Activated CD4-positive, alpha-beta T cell treated with anti-CD3 and anti-CD28 coated beads, Interleukin-2, amount 10 ng/mL, durations not matched to agents 24 days and 14 days (primary cell): ENCODE measurements at regions of chr6 and their contacts with region 1.

Region 1: GRCh38 chr6:111737065-111737521 is 131.4 kb upstream of the TRAF3IP2 start:
- DNase-seq: no peak
- H3K4me3 Mint-ChIP-seq: peak overlapping the region; percentile 36
- H3K27ac Mint-ChIP-seq: peak overlapping the region; percentile 74
- H3K4me1 Mint-ChIP-seq: peaks cover 71% of the 10 kb centered on the region
- H3K27me3 Mint-ChIP-seq: no peaks in the 10 kb centered on the region

Region 2: GRCh38 chr6:111700135-111700690 is 36.9 kb before region 1 on chr6:
- intact Hi-C with region 1: no loop called
- DNase-seq: no peak
- H3K4me3 Mint-ChIP-seq: no peak overlapping the region
- H3K27ac Mint-ChIP-seq: no peak overlapping the region
- H3K4me1 Mint-ChIP-seq: peaks cover 16% of the 10 kb centered on the region
- H3K27me3 Mint-ChIP-seq: no peaks in the 10 kb centered on the region

Region 3: DNA sequence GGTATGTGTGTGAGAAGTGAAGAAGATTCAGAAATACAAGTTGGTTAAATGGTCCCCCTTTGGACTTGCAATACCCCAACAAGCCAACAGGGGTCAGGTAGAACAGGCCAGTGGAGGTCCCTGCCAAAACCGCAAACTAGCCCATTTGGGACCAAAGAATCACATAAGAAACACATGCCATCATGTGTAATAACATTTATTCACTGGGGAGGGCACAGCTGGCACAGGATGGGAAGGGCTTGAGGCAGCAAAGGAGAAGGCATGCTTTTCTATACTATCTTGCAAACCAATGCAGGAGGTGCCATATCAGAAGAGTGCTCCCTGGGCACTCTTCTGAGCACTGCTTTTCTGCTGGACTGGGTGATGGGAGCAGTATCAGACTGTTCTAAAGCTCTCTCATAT is 15.3 kb before region 1 on chr6:
- intact Hi-C with region 1: loop called (anchors 2 kb)
- DNase-seq: peak; percentile 81
- H3K4me3 Mint-ChIP-seq: no peak overlapping the region
- H3K27ac Mint-ChIP-seq: peak overlapping the region; percentile 52
- H3K4me1 Mint-ChIP-seq: peaks cover 54% of the 10 kb centered on the region
- H3K27me3 Mint-ChIP-seq: no peaks in the 10 kb centered on the region

Region 4: GRCh38 chr6:111766201-111766857 is 29.2 kb after region 1 on chr6:
- intact Hi-C with region 1: no loop called
- DNase-seq: no peak
- H3K4me3 Mint-ChIP-seq: peak overlapping the region; percentile 47
- H3K27ac Mint-ChIP-seq: peak overlapping the region; percentile 98
- H3K4me1 Mint-ChIP-seq: peaks cover 93% of the 10 kb centered on the region
- H3K27me3 Mint-ChIP-seq: no peaks in the 10 kb centered on the region

Region 5: DNA sequence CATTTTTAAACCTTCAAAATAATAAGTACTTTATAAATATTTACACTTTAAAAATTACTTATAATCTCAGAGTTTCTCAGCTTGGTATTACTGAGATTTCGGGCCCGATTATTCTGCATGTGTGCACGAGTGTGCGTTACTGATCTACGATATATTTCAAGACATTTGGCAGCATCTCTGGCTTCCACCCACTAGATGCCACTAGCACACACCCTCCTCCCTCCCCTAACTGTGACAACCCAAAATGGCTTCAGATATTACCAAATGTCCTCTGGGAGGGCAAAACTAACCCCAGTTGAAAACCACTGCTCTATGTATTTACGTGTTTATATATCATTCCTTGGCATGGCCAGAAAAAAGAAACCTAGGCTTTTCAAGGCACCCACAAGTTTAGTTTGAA is 40.3 kb after region 1 on chr6:
- intact Hi-C with region 1: no loop called
- DNase-seq: no peak
- H3K4me3 Mint-ChIP-seq: no peak overlapping the region
- H3K27ac Mint-ChIP-seq: peak overlapping the region; percentile 81
- H3K4me1 Mint-ChIP-seq: peaks cover 73% of the 10 kb centered on the region
- H3K27me3 Mint-ChIP-seq: no peaks in the 10 kb centered on the region